ENCODE measurements at regions of chr5 and their contacts with region 1.

Region 1: DNA sequence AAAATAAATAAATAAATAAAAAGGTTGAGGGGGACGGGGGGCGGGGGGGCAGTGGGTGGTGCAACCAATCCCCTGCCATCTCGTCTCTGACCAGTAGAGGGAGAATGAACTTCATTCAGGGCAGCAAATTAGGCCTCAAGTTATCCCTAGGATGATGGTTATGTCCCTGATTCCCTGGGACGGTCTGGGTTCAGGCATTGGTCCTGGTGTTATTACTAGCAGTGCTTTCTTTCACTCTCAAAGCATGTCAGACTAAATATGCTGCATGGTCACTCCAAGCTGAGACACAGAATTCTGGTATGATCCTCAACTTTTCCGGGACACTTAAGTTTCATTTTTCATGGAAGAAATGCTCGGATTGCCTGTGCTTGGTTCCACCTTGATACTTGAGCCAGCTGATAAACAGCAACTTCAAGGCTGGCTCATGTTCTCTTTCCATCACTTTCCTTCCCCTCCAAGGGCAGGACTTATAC is 59.4 kb downstream of the DAP start:
- DNase-seq: peak in 1 of 2 experiments; percentile 44
- H3K4me3 ChIP-seq: peak overlapping the region; percentile 16; the same call in 1 of the 2 replicates
- H3K27ac ChIP-seq: peak overlapping the region; percentile 96
- H3K4me1 ChIP-seq: peaks cover 63% of the 10 kb centered on the region
- H3K27me3 ChIP-seq: no peaks in the 10 kb centered on the region
- CTCF ChIP-seq: peak; percentile 81

Region 2: DNA sequence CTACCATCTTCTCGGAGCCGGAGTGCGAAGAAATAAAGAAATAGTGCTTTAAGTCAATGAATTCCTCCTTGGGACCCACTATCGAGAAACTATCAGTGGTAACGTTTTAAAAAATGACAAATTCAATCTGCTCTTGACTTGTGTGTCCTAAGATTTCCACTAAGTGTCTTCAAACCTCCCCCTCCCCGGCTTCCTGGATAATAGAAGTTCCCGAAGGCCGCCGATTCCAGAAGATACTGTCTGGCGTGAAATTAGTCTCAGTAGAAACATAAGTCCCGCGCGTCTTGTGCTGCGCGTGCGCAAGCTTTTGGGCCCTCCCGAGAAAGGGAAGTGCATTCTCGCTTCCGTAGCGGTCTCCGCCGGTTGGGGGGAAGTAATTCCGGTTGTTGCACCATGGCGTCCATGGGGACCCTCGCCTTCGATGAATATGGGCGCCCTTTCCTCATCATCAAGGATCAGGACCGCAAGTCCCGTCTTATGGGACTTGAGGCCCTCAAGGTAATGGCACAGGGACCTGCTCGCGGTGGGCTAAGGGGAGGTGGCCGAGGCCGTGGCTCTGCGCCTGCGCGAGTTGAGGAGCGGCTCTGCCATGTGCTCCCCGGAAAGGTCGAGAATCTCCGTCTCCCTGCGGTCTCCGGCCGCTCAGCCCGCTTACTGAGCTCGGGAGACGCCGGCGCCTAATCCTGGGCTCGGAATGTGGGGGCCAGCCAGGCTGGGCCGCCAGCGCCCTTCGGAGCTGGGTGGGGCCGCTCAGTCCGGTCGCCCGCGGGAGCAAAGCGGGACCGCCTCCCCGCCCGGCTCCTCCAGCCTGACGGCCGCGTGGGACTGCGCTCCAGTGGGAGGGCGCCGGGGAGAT is 451.4 kb before region 1 on chr5 and contains the start of gene CCT5:
- CTCF ChIA-PET with region 1: no interaction called
- POLR2A ChIA-PET with region 1: no interaction called
- intact Hi-C with region 1: loop called (anchors 10 kb)
- DNase-seq: peak; percentile 97 to 98
- H3K4me3 ChIP-seq: peak within 1 kb of the TSS; percentile 100
- H3K27ac ChIP-seq: peak within 1 kb of the TSS; percentile 91
- H3K4me1 ChIP-seq: peaks cover 17% of the 10 kb centered on the region
- H3K27me3 ChIP-seq: no peaks in the 10 kb centered on the region
- CTCF ChIP-seq: no peak
- total RNA-seq, gene CCT5: 658 and 831 TPM in 2 replicates

Region 3: GRCh38 chr5:10307206-10308148 is 394.1 kb before region 1 on chr5 and contains the start of gene CMBL:
- CTCF ChIA-PET with region 1: no interaction called
- POLR2A ChIA-PET with region 1: no interaction called
- intact Hi-C with region 1: loop called (anchors 5 kb)
- DNase-seq: peak; percentile 56 to 94
- H3K4me3 ChIP-seq: peak within 1 kb of the TSS; percentile 79
- H3K27ac ChIP-seq: peak within 1 kb of the TSS; percentile 79
- H3K4me1 ChIP-seq: peaks cover 44% of the 10 kb centered on the region
- H3K27me3 ChIP-seq: no peaks in the 10 kb centered on the region
- CTCF ChIP-seq: no peak
- total RNA-seq, gene CMBL: 286 and 294 TPM in 2 replicates

Region 4: GRCh38 chr5:10663489-10664179 is 38.0 kb before region 1 on chr5:
- CTCF ChIA-PET with region 1: no interaction called
- POLR2A ChIA-PET with region 1: no interaction called
- intact Hi-C with region 1: no loop called
- DNase-seq: no peak
- H3K4me3 ChIP-seq: no peak overlapping the region
- H3K27ac ChIP-seq: no peak overlapping the region
- H3K4me1 ChIP-seq: no peaks in the 10 kb centered on the region
- H3K27me3 ChIP-seq: no peaks in the 10 kb centered on the region
- CTCF ChIP-seq: no peak

Region 5: GRCh38 chr5:10724799-10725507 is 23.4 kb after region 1 on chr5:
- CTCF ChIA-PET with region 1: interaction called, 31 read pairs
- POLR2A ChIA-PET with region 1: interaction called, 12 read pairs
- intact Hi-C with region 1: loop called (anchors 1 kb)
- DNase-seq: peak; percentile 86 to 97
- H3K4me3 ChIP-seq: peak overlapping the region; percentile 43; the same call in 1 of the 2 replicates
- H3K27ac ChIP-seq: peak overlapping the region; percentile 91
- H3K4me1 ChIP-seq: peaks cover 78% of the 10 kb centered on the region
- H3K27me3 ChIP-seq: no peaks in the 10 kb centered on the region
- CTCF ChIP-seq: peak; percentile 69

Region 6: GRCh38 chr5:10761166-10761932 is 59.7 kb after region 1 on chr5 and contains the start of gene DAP:
- CTCF ChIA-PET with region 1: interaction called, 4 read pairs
- POLR2A ChIA-PET with region 1: interaction called, 14 read pairs
- intact Hi-C with region 1: loop called (anchors 1 kb)
- DNase-seq: peak; percentile 60 to 99
- H3K4me3 ChIP-seq: peak within 1 kb of the TSS; percentile 85
- H3K27ac ChIP-seq: peak within 1 kb of the TSS; percentile 80
- H3K4me1 ChIP-seq: peaks cover 36% of the 10 kb centered on the region
- H3K27me3 ChIP-seq: no peaks in the 10 kb centered on the region
- CTCF ChIP-seq: no peak
- total RNA-seq, gene DAP: 256 and 279 TPM in 2 replicates

Region 7: DNA sequence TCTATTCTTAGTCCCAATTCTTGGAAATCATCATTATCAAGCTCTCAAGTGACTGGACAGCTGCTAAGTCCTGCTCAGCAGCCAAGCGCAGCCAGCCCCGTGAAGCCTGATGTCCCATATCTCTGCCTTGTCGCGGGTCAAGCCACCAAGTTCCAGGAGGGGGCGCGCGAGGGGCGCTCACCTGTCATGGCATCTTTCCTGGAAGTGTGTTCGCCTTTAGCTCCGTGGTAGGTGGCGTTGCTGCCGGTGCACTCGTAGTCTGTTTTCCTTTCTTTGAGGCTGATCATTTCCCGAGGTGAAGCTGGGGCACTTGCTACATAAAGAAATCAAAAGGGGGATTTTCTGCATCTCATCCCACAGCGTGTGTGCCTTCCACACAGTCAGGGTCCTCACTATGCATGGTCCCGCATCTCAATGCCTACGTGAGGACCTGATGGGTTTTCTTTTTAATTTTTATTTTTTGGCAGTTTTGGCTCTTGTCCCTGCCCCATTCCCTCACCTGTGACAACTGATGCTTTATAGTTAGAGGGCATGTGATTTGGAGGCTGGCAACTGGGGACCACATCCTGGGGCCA is 286.4 kb after region 1 on chr5:
- CTCF ChIA-PET with region 1: no interaction called
- POLR2A ChIA-PET with region 1: no interaction called
- intact Hi-C with region 1: loop called (anchors 5 kb)
- DNase-seq: peak in 1 of 2 experiments; percentile 72
- H3K4me3 ChIP-seq: no peak overlapping the region
- H3K27ac ChIP-seq: no peak overlapping the region
- H3K4me1 ChIP-seq: no peaks in the 10 kb centered on the region
- H3K27me3 ChIP-seq: peaks cover 49% of the 10 kb centered on the region
- CTCF ChIP-seq: peak; percentile 70

Region 8: GRCh38 chr5:11251262-11251661 is 549.7 kb after region 1 on chr5:
- CTCF ChIA-PET with region 1: no interaction called
- POLR2A ChIA-PET with region 1: no interaction called
- intact Hi-C with region 1: loop called (anchors 1 kb)
- DNase-seq: peak; percentile 51 to 74
- H3K4me3 ChIP-seq: 0 out of 2 replicates have a peak overlapping the region, but pooled peaks have one; percentile 9
- H3K27ac ChIP-seq: no peak overlapping the region
- H3K4me1 ChIP-seq: peaks cover 18% of the 10 kb centered on the region
- H3K27me3 ChIP-seq: no peaks in the 10 kb centered on the region
- CTCF ChIP-seq: no peak

Measured in PC-9 (cell line).